ENCODE measurements at regions of chr2 and their contacts with region 1.

Region 1: DNA sequence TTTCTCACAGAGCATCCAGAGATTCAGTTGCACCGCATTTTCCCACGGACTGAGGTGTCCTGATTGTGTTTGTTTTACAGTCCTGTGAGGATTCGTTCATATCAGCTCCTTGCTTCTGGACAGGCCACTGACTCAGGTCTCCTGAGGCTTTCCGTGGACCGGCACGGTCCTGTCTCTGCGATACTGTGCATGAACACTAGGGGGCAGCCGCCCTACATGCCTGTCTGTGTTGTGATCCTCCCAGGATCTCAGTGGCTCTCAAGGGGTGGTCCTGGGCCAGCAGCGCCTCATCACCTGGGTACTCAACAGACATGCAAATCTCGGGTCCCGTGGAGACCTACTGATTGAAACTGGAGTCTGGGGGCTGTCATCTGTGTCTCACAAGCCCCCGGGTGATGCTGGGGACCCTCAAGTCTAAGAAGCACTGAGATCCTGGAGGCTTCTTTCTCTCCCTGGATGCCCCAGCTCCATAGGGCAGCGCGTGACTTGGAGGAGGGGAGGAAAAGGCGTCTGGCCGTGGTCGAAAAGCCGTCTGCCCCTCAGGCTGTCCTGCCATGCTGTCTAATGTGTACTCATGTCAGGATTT is 28.9 kb downstream of the IL1R2 start:
- DNase-seq: peak; percentile 70
- H3K4me3 Mint-ChIP-seq: no peak overlapping the region
- H3K27ac Mint-ChIP-seq: no peak overlapping the region
- H3K4me1 Mint-ChIP-seq: peaks cover 18% of the 10 kb centered on the region
- H3K27me3 Mint-ChIP-seq: peaks cover 13% of the 10 kb centered on the region

Region 2: DNA sequence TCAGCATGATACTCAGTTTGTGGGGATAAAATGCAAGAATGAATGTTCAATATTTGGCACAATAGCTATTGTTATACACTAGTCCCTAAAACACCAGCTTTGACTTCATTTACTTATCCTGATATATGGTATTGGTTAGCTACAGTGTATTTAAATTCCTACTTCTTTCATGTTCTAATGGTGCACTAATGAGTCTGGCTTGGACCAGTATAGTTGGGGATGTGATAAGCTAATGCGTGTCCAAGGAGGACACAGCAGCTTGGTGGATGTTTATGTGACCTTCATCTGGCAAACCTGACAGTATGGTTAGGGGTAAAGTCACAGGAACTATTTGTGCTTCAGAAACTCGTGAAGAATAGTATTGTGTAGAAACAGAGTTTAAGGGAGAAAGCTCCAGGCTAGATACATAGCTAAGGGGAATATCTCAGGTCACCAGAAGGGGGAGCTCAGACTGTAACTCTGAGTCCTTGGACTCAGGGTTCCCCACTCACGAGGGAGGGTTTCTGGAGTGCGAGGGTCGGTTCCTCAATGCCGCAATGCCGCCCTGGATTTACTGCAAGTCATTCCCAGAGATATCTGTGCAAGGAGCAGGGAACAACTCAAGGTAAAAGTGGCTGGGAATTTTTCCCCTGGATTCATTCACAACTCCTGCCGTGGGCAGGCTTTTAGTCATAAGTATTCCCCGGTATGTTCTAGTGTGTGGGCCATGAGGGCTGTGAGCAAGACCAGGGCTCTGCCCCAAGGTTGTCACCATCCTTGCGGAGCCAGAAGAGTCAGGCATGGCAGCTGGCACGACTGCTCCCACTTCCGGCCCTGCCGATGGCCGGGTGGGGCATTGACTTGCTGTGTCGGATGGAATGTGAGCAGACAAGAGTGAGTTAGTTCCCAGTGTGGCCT is 14.5 kb before region 1 on chr2:
- intact Hi-C with region 1: loop called (anchors 2 kb)
- DNase-seq: no peak
- H3K4me3 Mint-ChIP-seq: no peak overlapping the region
- H3K27ac Mint-ChIP-seq: no peak overlapping the region
- H3K4me1 Mint-ChIP-seq: peaks cover 14% of the 10 kb centered on the region
- H3K27me3 Mint-ChIP-seq: peaks cover 2% of the 10 kb centered on the region

Region 3: DNA sequence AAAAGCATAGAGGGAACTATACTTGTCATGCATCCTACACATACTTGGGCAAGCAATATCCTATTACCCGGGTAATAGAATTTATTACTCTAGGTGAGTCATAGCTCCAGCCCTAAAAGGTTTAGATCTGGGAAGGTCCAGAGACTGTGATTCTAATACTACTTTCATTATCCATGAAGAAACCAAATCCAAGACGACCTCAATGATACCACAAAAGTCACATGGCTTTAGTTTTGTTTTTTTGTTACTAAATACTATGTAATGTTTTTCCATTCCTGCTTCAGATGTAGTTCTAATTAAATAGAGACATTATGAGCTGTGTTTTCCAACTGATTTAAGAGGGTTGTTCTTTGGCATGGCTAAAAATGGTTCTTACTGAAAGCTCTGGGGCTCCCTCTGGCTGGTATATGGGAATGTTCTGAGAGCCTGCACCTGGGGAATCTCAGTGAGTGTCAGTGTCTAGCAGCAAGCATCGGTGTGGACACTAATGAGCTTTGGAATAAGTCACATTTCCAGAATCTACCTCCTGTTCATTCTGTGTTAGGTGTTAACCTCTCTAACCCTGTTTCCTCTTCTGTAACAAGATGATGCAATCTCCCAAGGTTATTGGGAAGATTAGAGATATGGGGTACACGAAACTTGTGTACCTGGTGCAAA is 145.6 kb after region 1 on chr2:
- intact Hi-C with region 1: loop called (anchors 5 kb)
- DNase-seq: no peak
- H3K4me3 Mint-ChIP-seq: no peak overlapping the region
- H3K27ac Mint-ChIP-seq: no peak overlapping the region
- H3K4me1 Mint-ChIP-seq: peaks cover 7% of the 10 kb centered on the region
- H3K27me3 Mint-ChIP-seq: peaks cover 2% of the 10 kb centered on the region

Region 4: DNA sequence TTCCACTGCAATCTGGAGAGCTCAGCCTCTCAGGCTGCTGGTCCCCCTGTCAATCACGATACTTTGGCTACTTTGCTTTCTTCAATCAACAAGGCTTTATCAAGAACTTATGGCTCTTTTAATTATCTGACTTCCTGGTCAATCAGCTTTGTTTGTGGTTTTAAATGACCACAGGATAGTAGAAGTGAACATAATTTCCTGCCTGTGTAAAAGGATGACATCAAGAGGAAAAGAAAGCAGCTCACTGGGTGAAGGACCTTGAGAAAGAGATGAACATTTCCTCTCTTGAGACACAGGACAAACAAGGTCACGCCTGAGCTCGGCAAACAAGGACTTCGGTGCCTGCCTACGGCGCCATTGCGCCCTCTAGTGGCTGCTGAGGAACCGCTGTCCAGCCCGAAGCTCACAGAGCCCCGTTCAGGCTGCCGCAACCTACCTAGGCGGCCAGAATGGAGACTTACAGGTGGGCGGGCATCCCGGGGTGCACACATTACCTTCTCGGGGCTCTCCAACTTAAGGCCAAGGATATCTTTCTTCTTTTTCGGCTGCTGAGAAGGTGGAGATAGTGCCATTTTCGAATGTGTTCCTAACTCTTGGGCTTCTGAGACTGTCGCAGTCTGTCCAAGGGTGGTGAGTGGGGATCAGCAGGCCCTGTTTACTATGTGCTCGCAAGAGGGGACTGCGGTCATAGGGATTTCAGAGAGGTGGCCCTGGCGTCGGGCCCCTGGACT is 220.1 kb after region 1 on chr2:
- intact Hi-C with region 1: loop called (anchors 1 kb)
- DNase-seq: peak; percentile 82
- H3K4me3 Mint-ChIP-seq: peak overlapping the region; percentile 4
- H3K27ac Mint-ChIP-seq: peak overlapping the region; percentile 51
- H3K4me1 Mint-ChIP-seq: peaks cover 36% of the 10 kb centered on the region
- H3K27me3 Mint-ChIP-seq: no peaks in the 10 kb centered on the region

Region 5: GRCh38 chr2:102355526-102356380 is 335.1 kb after region 1 on chr2 and contains the start of gene IL18R1:
- intact Hi-C with region 1: loop called (anchors 1 kb)
- DNase-seq: peak; percentile 71
- H3K4me3 Mint-ChIP-seq: peak within 1 kb of the TSS; percentile 97
- H3K27ac Mint-ChIP-seq: peak within 1 kb of the TSS; percentile 96
- H3K4me1 Mint-ChIP-seq: peaks cover 47% of the 10 kb centered on the region
- H3K27me3 Mint-ChIP-seq: no peaks in the 10 kb centered on the region
- total RNA-seq, gene IL18R1: 57.8 and 61.3 TPM in 2 replicates

Region 6: DNA sequence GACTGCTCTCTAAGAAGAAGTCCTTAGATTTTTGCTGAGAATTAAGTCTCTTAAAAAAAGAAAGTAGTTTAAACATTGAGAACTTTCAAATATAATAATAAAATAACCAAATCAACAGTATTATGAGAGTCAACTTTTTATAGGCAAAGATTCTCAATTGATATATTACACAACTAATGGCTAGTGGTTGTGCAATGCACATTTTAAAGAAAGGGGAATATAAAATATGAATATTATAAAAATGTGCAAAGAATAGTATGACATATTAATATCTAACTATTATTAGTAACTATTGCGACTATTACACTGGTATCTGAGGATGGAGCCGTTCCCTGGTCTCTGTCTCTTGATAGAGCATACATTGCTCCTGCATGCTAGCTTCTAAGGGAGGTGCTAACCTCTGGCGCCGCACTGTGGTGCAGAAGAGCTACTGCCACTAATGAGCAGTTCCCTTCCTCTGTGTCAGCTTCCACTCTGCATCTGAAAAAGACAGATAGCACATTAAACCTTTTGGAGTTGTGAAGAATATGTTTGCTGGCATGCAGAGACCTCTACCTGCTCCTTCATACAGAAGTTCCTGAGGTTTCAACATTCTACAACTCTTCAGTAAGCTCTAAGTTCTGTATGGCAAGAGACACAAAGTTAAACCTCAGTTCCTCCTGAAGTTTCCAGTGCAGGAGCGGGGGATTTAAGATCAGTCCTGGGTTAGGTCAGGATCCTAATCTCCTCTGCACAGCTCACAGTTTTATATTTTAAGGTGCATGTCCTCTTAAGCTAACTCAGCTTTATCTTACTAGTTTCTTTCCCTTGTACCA is 595.1 kb after region 1 on chr2:
- intact Hi-C with region 1: loop called (anchors 10 kb)
- DNase-seq: no peak
- H3K4me3 Mint-ChIP-seq: no peak overlapping the region
- H3K27ac Mint-ChIP-seq: no peak overlapping the region
- H3K4me1 Mint-ChIP-seq: peaks cover 9% of the 10 kb centered on the region
- H3K27me3 Mint-ChIP-seq: peaks cover 56% of the 10 kb centered on the region

Measured in activated T-helper 1 cell treated with anti-CD3 and anti-CD28 coated beads, Interleukin-12 subunit alpha, Interleukin-12 subunit beta, Interleukin-2, Interleukin-4 antibody, amounts not matched to agents 30 ng/mL and 10 ng/mL and 1 ng/mL, durations not matched to agents 14 hours and 24 hours and 36 hours (primary cell).